Psoas muscle (tissue), 8 donors: ENCODE measurements at regions of chr1 and their contacts with region 1.

Region 1: DNA sequence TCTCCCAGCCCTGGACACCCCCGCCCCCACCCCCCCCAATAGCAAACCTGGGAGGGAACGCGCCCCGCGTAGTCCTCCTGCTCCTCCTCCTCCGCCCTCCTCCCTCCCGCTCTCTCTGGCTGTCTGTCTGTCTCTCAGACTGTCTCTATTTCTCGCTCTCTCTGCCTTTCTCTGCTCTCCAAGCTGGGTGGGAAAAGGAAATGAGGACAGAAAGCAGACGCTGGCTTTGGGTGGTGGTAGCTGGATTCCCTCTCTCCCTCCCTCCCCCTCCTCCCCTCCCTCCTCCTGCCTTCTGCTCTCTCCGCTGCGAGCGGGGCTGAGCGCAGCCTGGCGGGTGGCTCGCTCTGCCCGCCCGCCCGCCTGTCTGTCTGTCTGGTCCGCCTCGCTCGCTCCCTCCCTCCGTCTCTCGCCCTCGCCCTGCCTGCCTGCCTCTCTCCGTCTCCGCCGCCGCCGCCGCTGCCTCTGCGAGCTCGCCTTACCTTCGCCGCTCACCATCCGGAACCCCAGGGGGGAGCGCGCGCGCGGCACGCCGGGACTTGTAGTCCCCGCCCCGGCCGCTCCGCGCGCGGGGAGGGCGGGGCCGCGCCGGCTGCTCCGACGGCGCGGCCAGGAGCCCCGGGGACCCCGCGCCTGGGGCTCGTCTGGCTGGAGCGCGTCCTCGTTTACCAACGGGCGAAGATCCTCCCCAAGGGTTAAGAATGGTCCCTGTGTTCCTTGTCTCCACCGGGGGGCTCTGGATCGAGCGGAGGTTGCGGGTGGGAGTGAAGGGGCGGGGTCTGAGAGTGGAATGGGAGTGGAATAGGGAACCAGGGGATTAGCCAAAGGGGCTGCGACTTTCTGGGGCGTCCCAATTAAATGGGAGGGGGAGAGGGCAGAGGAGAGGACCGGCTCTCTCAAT is at the start of gene AHDC1:
- DNase-seq: peak; percentile 94 to 96
- ATAC-seq: peak; percentile 68 to 75 (median 70)
- H3K4me3 ChIP-seq: peak within 1 kb of the TSS; percentile 99
- H3K27ac ChIP-seq: peak within 1 kb of the TSS; percentile 99
- H3K4me1 ChIP-seq: peaks cover 23% of the 10 kb centered on the region
- H3K27me3 ChIP-seq: no peaks in the 10 kb centered on the region
- CTCF ChIP-seq: no peak
- total RNA-seq, gene AHDC1: 35.9 to 65.2 (median 59.0) TPM

Region 2: GRCh38 chr1:27179379-27179778 is 424.6 kb before region 1 on chr1:
- intact Hi-C with region 1: no loop called
- DNase-seq: no peak
- ATAC-seq: no peak
- H3K4me3 ChIP-seq: no peak overlapping the region
- H3K27ac ChIP-seq: no peak overlapping the region
- H3K4me1 ChIP-seq: no peaks in the 10 kb centered on the region
- H3K27me3 ChIP-seq: no peaks in the 10 kb centered on the region
- CTCF ChIP-seq: no peak

Region 3: DNA sequence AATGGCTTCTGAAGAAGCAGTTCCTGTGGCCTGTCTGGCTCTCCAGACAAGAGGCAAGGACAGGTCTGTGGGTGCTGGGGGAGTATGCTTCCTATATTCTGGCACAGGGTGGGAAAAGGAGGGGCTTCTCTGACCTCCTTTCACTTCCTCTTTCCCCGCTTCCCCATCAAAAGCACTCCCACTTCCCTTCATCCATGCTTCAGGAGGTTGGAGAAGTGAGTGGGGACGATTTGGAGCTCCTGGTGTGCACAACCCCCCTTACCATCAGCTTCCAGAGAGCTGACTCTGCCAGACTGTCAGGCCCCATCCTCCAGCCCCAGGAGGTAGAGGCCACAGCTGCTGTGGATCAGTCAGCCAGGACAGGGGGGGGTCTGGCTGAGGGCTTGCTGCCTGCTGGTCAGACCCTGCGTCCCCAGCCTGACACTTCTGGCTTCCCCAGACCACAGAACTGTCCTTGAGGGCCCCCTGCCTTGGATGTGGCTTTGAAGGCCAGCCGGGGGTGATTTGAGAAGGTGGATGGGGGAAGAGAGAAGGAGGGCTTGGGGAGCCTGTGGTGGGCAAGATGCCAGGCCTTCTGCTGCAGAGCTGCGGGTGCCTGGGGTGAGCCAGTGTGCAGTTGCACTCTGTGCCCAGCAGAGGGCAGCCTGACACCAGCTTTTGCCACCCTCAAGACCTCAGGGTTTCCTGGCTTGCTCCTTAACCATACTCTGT is 303.4 kb before region 1 on chr1:
- intact Hi-C with region 1: loop called (anchors 5 kb)
- DNase-seq: peak; percentile 78 to 91
- ATAC-seq: peak; percentile 79 to 96 (median 88)
- H3K4me3 ChIP-seq: no peak overlapping the region
- H3K27ac ChIP-seq: peak overlapping the region; percentile 66
- H3K4me1 ChIP-seq: peaks cover 30% of the 10 kb centered on the region
- H3K27me3 ChIP-seq: no peaks in the 10 kb centered on the region
- CTCF ChIP-seq: peak; percentile 99

Region 4: DNA sequence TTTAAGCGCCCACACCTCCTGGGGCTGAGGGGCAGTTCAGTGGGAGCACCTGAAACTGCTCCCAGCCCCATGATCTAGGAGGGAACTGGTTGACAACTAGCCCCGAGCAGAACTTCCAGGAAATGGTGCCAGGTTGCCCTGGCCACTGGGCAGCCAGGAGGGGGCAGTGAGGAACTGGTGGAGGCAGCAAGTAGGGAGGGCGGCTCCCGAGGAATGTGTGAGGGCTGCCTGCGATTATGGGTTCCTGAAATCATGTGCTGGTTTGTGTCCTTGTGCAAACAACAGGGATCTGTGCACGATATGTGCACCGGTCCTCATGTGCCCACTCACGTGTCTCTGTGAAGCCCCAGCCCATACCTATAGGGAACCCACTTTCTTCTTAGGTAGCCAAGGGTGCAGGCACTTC is 201.6 kb before region 1 on chr1:
- intact Hi-C with region 1: loop called in 1 of 2 experiments (anchors 2 kb)
- DNase-seq: peak; percentile 75 to 89
- ATAC-seq: peak; percentile 52 to 71 (median 59)
- H3K4me3 ChIP-seq: peak overlapping the region; percentile 45
- H3K27ac ChIP-seq: peak overlapping the region; percentile 85
- H3K4me1 ChIP-seq: peaks cover 50% of the 10 kb centered on the region
- H3K27me3 ChIP-seq: peaks cover 0 to 3% (median 0%) of the 10 kb centered on the region in 3 donors
- CTCF ChIP-seq: peak; percentile 56

Region 5: GRCh38 chr1:27489910-27490741 is 113.8 kb before region 1 on chr1 and contains the start of gene WASF2:
- intact Hi-C with region 1: loop called in 1 of 2 experiments (anchors 5 kb)
- DNase-seq: peak; percentile 98
- ATAC-seq: peak; percentile 91 to 96 (median 94)
- H3K4me3 ChIP-seq: peak within 1 kb of the TSS; percentile 94
- H3K27ac ChIP-seq: peak within 1 kb of the TSS; percentile 99
- H3K4me1 ChIP-seq: peaks cover 30% of the 10 kb centered on the region
- H3K27me3 ChIP-seq: no peaks in the 10 kb centered on the region
- CTCF ChIP-seq: no peak
- total RNA-seq, gene WASF2: 29.4 to 40.6 (median 35.9) TPM

Region 6: DNA sequence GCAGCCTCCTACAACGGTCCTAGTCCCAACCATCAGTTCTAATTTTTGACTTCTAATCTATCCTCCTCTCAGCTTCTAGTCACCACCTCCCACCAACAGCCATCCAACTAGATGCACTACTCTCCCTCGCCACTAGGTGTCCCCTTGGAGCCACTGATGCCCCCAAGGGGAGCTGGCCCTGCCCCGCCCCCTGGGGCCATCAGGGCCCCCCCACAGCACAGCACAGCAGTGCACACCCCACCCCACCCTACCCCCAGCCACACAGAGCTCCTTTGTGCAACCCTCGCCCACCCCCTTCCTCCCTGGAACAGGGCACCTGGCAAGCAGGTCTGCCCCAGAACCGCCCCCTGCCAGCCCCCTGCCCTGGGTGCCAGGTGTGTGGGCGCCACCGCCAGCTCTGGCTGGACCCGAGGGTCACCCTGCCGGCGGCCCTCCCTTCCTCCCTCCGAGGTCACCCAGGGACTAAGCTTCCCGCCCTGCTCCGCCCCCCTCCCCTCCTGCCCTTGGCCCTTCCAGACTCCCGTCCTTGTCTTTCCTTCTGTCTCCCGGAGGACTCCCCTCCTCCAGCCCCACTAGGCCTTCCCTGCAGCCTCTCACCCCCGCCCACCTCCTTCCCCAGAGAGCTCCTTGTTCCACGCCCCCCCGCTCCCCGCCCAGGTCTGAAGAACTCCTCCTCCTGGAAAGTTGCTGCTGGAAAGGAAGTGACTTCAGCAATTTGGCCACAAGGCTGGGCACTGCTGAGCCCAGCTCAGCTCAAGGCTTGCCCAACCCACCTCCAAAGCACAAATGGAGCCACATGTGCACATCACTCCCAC is 46.9 kb before region 1 on chr1:
- intact Hi-C with region 1: loop called in 1 of 2 experiments (anchors 5 kb)
- DNase-seq: peak; percentile 93 to 96
- ATAC-seq: peak; percentile 76 to 84 (median 82)
- H3K4me3 ChIP-seq: peak overlapping the region; percentile 43
- H3K27ac ChIP-seq: peak overlapping the region; percentile 90
- H3K4me1 ChIP-seq: peaks cover 70% of the 10 kb centered on the region
- H3K27me3 ChIP-seq: no peaks in the 10 kb centered on the region
- CTCF ChIP-seq: peak; percentile 96

Region 7: GRCh38 chr1:27574871-27575831 is 28.8 kb before region 1 on chr1:
- intact Hi-C with region 1: loop called in 1 of 2 experiments (anchors 2 kb)
- DNase-seq: peak; percentile 83 to 92
- ATAC-seq: peak; percentile 55 to 65 (median 58)
- H3K4me3 ChIP-seq: peak overlapping the region; percentile 68
- H3K27ac ChIP-seq: peak overlapping the region; percentile 94
- H3K4me1 ChIP-seq: peaks cover 79% of the 10 kb centered on the region
- H3K27me3 ChIP-seq: no peaks in the 10 kb centered on the region
- CTCF ChIP-seq: no peak